ENCODE measurements at regions of chr6 and their contacts with region 1.

Region 1: DNA sequence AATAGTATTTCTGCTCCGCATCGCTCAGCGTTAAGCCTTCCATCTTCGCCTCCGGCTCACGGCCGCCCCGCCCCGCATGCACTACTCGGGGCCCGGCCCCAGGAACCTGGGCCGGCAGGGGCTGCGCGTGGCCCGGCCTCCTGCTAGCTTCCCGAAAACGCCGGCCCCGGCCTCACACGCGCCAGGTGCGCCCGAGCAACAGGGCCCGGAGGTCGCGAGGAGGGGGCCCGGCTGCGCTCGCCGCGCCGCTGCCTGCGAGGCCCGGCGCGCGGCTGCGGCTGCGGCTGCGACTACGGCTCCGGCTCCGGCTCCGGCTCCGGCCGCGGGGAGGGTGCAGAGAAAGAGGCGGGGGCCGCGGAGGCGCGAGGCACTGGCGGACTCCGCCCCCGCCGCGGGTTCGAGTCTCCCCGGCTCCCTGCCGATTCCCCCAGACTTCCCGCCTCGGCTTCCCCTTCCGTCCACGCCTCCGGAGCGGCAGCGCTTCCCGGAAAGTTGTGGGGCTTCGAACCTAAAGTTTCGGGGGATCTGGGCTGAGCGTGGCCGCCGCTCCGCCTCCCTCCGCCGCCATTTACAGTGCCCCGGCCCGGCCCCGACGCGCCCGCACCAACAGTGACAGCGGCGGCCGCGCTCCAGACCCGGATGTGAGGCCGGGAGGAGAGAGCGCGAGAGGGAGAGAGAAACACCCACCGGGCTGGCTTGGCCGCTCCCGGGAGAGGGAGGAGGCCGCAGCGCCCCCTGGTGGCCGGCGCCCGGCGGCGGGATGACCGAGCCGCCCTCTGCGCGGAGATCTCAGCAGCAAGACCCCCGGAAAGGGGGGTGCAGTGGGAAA is at the start of gene REPS1:
- DNase-seq: peak; percentile 84
- H3K4me3 ChIP-seq: peak within 1 kb of the TSS; percentile 52 to 97 (median 66)
- H3K27ac ChIP-seq: peak within 1 kb of the TSS; percentile 58
- H3K4me1 ChIP-seq: peaks cover 12% of the 10 kb centered on the region
- H3K27me3 ChIP-seq: peaks cover 0 to 3% of the 10 kb centered on the region in 2 experiments
- CTCF ChIP-seq: peak; percentile 90 to 95
- POLR2A ChIP-seq: peak; percentile 69
- total RNA-seq, gene REPS1: 26.3 and 35.0 TPM in 2 replicates

Region 2: DNA sequence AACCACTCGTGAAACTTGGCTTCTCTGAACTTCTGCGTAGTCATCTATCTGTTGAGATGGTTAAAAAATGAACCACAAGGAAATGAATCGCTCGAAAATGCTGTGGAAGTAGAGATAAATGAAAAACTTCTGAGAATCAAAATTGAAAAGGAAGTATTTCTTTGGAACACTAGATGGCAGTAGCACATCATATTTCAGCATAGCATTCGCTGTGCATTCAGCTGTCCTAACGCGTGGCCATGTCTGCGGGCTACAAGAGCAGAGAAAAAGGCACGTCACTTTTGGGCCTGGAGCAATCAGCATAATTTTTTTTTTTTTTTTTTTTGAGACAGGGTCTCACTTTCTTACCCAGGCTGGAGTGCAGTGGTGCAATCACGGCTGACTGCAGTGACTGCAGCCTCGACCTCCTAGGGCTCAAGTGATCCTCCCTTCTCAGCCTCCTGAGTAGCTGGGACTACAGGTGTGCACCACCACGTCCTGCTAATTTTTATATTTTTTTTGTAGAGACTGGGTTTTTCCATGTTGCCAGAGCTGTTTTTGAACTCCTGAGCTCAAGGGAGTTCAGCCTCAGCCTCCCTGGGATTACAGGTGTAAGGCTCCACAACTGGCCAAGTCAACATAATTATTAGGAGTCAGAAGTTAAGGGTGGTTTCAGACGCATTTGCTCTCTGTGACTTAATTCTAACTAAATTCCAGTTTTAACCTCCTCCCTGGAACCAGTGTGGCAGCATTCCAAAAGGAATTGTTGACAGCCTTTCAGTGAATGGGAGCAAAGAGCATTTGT is 871.8 kb before region 1 on chr6:
- CTCF ChIA-PET with region 1: no interaction called
- POLR2A ChIA-PET with region 1: interaction called, 4 read pairs
- dilution Hi-C with region 1: no loop called
- intact Hi-C with region 1: loop called (anchors 1 kb)
- DNase-seq: peak; percentile 71
- H3K4me3 ChIP-seq: no peak overlapping the region
- H3K27ac ChIP-seq: no peak overlapping the region
- H3K4me1 ChIP-seq: no peaks in the 10 kb centered on the region
- H3K27me3 ChIP-seq: peaks cover 5 to 8% of the 10 kb centered on the region in 2 experiments
- CTCF ChIP-seq: peak; percentile 42 to 44
- POLR2A ChIP-seq: no peak

Region 3: DNA sequence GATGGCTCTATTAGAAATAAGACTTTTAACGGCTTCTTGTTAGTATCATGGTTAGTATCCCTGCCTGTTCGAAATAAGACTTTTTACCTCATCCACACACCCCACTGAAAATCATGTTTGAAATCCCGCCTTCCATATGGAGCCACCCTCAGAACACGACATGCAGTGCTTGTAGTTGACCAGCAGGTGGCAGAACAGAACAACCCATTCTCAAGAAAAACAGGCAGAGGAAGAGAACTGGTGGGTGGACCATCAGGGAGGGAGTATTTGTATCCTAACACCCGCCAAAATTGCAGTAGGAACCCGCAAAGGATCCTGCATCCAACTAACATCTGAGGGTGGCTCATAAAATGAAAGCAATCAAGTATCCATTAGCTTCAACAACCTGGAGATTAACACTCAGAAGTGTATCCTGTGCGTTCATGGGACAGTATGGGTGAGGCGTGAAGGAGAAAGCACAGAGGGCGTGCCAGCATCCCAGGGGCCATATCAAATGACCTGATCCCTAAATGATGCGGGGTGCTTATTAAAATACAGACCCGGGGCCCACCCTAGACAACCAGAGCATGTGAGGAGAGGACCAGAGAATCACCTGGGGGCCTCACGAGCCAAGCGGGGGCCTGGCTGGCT is 398.9 kb before region 1 on chr6:
- CTCF ChIA-PET with region 1: interaction called, 3 read pairs
- POLR2A ChIA-PET with region 1: no interaction called
- dilution Hi-C with region 1: no loop called
- intact Hi-C with region 1: loop called (anchors 2 kb)
- DNase-seq: peak; percentile 78
- H3K4me3 ChIP-seq: no peak overlapping the region
- H3K27ac ChIP-seq: no peak overlapping the region
- H3K4me1 ChIP-seq: peaks cover 21% of the 10 kb centered on the region
- H3K27me3 ChIP-seq: no peaks in the 10 kb centered on the region
- CTCF ChIP-seq: peak; percentile 80 to 85
- POLR2A ChIP-seq: no peak

Region 4: GRCh38 chr6:138682704-138683527 is 304.9 kb before region 1 on chr6:
- CTCF ChIA-PET with region 1: no interaction called
- POLR2A ChIA-PET with region 1: no interaction called
- dilution Hi-C with region 1: no loop called
- intact Hi-C with region 1: no loop called
- DNase-seq: no peak
- H3K4me3 ChIP-seq: no peak overlapping the region
- H3K27ac ChIP-seq: no peak overlapping the region
- H3K4me1 ChIP-seq: peaks cover 2% of the 10 kb centered on the region
- H3K27me3 ChIP-seq: no peaks in the 10 kb centered on the region
- CTCF ChIP-seq: no peak
- POLR2A ChIP-seq: no peak

Region 5: DNA sequence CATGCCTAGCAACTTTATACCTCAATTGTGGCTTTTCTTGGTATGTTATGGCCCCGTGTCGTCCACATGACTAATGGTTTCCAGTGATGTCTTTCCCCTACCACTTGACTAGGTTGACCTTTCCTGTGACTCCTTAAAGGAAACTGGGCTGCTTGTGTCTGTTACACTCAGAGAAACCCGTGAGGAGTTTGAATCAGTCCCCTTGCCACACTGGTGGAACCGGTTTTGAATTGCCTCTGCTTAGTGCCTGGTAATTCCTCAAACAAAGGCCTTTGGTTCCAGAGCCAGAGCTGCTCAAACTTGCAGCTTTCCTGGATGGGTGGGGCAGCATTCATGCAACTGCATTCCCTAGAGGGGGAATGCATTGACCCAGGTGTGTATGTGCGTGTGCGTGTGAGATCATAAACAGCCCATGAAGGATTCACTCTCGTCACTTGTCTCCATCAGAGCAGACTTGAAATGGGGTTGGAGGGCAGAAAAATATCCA is 170.0 kb before region 1 on chr6:
- CTCF ChIA-PET with region 1: interaction called, 78 read pairs
- POLR2A ChIA-PET with region 1: no interaction called
- dilution Hi-C with region 1: no loop called
- intact Hi-C with region 1: loop called (anchors 1 kb)
- DNase-seq: peak; percentile 56
- H3K4me3 ChIP-seq: no peak overlapping the region
- H3K27ac ChIP-seq: no peak overlapping the region
- H3K4me1 ChIP-seq: peaks cover 23% of the 10 kb centered on the region
- H3K27me3 ChIP-seq: no peaks in the 10 kb centered on the region
- CTCF ChIP-seq: no peak
- POLR2A ChIP-seq: no peak

Region 6: GRCh38 chr6:138923561-138923960 is 64.3 kb before region 1 on chr6:
- CTCF ChIA-PET with region 1: interaction called, 9 read pairs
- POLR2A ChIA-PET with region 1: no interaction called
- dilution Hi-C with region 1: no loop called
- intact Hi-C with region 1: loop called (anchors 2 kb)
- DNase-seq: no peak
- H3K4me3 ChIP-seq: no peak overlapping the region
- H3K27ac ChIP-seq: no peak overlapping the region
- H3K4me1 ChIP-seq: peaks cover 9% of the 10 kb centered on the region
- H3K27me3 ChIP-seq: no peaks in the 10 kb centered on the region
- CTCF ChIP-seq: no peak
- POLR2A ChIP-seq: no peak

Region 7: DNA sequence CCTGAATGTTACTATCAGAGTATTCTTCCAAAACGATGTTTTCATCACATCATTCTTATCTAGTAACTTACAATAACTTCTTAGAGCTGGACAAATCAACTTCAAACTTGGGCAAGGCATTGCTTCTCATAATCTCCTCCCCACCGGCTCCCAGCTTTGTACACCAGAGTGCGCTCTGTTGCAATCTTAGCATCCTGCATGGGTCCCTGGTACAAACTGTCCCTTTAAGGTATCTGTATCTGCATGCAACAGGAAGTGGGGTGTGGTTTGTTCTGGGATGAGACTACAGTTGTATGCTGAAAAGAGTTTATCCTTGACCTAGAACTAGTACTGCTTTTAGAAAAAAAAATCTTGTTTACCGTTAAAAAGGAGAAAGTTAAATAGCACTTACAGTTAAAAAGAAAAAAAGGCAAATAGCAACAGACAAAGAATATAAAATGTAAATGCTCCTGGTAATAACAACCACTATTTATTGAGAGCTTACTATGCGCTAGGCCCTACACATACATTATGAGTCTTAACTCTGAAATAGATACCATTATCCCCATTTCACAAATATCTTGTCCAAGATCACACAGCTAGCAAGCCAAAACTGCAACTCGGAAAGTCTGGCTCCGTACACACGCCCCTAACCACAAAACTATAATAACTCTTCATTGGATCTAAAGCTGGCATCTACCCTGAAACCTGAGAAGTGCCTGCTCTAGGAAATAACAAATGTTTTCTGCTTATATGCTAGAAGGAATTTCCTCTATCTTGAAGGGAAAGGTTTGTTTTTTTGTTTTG is 137.2 kb after region 1 on chr6:
- CTCF ChIA-PET with region 1: no interaction called
- POLR2A ChIA-PET with region 1: no interaction called
- dilution Hi-C with region 1: no loop called
- intact Hi-C with region 1: no loop called
- DNase-seq: peak; percentile 26
- H3K4me3 ChIP-seq: no peak overlapping the region
- H3K27ac ChIP-seq: no peak overlapping the region
- H3K4me1 ChIP-seq: no peaks in the 10 kb centered on the region
- H3K27me3 ChIP-seq: no peaks in the 10 kb centered on the region
- CTCF ChIP-seq: peak; percentile 25 to 33
- POLR2A ChIP-seq: no peak

Region 8: GRCh38 chr6:139364302-139364981 is 376.6 kb after region 1 on chr6:
- CTCF ChIA-PET with region 1: interaction called, 6 read pairs
- POLR2A ChIA-PET with region 1: no interaction called
- dilution Hi-C with region 1: no loop called
- intact Hi-C with region 1: loop called (anchors 1 kb)
- DNase-seq: peak; percentile 66
- H3K4me3 ChIP-seq: no peak overlapping the region
- H3K27ac ChIP-seq: no peak overlapping the region
- H3K4me1 ChIP-seq: peaks cover 18% of the 10 kb centered on the region
- H3K27me3 ChIP-seq: no peaks in the 10 kb centered on the region
- CTCF ChIP-seq: peak; percentile 19 to 43
- POLR2A ChIP-seq: no peak